Vagina (tissue), 2 donors: ENCODE measurements at regions of chr12 and their contacts with region 1.

Region 1: GRCh38 chr12:109385339-109386067 is 37.8 kb downstream of the MYO1H start:
- DNase-seq: no peak
- H3K4me3 ChIP-seq: no peak overlapping the region
- H3K27ac ChIP-seq: peak overlapping the region; percentile 36
- H3K4me1 ChIP-seq: peaks cover 8% of the 10 kb centered on the region
- H3K27me3 ChIP-seq: no peaks in the 10 kb centered on the region
- CTCF ChIP-seq: peak; percentile 35 to 57 (median 56)
- POLR2A ChIP-seq: no peak

Region 2: DNA sequence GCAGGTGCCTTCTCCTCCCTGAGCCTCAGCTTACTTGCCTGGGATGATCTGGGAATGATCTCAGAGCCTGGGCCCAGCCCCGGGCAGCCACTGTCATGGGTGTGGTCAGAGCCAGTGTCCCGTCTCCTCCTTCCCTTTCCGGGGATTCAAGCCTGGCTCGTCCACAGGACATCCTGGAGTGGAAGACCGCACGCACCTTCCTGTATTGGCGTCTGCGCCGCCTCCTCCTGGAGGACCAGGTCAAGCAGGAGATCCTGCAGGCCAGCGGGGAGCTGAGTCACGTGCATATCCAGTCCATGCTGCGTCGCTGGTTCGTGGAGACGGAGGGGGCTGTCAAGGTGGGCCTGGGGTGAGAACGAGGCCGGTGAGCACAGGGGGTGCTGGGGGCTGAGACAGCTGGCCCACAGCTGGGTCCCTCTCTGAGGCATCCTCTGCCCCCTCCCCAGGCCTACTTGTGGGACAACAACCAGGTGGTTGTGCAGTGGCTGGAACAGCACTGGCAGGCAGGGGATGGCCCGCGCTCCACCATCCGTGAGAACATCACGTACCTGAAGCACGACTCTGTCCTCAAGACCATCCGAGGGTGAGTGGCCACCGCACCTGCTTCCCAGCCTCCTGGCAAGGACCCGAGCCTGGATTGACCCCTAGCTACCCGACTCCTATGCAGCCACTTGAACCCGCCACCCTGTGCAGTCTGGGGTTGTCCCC is 120.4 kb before region 1 on chr12:
- intact Hi-C with region 1: loop called (anchors 5 kb)
- DNase-seq: no peak
- H3K4me3 ChIP-seq: no peak overlapping the region
- H3K27ac ChIP-seq: peak overlapping the region; percentile 72
- H3K4me1 ChIP-seq: no peaks in the 10 kb centered on the region
- H3K27me3 ChIP-seq: no peaks in the 10 kb centered on the region
- CTCF ChIP-seq: no peak
- POLR2A ChIP-seq: no peak

Region 3: DNA sequence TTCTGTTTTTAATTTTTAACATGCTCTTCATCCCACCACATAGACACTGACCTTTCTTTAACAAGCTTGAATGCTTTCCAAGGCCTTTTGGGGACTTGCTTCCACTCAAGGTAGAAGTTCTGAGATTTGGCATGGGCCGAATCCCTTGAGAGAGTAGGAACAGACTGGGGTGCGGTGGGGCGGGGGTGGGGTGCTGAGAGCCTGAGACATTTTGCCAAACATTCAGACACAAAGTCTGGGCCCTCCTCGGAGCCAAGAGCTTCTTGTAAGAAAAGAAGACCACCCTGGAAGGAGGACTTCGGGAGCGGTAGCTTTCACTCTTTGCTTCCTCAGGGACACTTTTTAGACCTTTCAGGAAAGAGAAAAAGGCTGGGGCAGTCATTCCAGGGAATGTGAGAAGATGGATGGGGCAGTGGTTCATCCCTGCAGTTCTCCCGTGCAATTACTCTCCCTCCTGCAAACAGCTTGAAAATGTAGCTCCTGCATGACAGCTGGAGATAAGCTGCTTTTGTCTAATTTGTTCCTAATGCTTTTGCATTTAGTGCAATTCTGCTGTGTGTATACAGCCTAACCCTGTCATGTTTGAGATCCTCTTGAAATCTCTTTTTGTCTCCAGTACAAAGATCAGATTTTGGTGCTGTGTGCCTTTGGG is 54.1 kb before region 1 on chr12:
- intact Hi-C with region 1: no loop called
- DNase-seq: no peak
- H3K4me3 ChIP-seq: no peak overlapping the region
- H3K27ac ChIP-seq: no peak overlapping the region
- H3K4me1 ChIP-seq: no peaks in the 10 kb centered on the region
- H3K27me3 ChIP-seq: no peaks in the 10 kb centered on the region
- CTCF ChIP-seq: no peak
- POLR2A ChIP-seq: no peak